ENCODE measurements at regions of chr6 and their contacts with region 1.

Region 1: DNA sequence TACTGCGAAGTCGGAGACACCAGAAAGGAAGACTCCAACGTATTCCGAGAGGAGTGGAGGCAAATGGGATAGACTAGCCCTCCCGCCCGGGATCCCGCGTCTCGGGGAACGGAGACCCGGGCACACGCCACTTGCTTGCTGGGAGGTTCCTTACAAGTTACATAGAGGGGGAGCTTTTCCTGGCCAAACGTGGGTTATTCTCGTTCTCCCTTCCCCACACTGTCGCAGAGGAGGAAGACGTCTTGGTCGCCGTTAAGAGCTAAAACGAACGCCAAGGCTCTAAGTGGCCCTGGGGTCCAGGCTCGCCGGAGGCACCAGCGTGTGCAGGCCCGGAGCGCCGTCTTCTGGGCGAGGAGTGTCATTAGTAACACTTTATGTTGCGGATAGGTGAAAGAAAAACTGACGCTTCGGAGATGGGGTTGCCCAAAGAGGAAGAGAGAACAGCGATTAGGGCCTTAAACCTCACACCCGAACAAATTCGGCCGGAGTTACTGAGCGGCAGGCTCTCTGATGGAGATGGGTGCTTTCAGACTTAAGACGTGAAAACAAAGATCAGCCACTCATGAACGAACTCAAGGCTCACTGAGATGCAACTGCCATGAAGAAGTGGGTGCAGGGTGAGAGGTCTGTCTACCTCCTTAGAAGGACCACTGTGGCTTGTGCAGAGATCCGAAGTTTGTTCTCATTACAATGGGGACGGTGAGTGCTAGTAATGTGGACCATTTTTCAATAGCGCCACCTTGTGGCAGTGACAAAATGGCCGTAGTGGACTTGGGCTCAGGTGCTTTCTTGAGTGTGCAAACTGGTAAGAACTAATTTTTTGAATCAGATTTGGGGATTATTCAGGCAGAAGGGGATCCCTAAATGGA is 11.7 kb upstream of the ZNF311 start:
- DNase-seq: peak; percentile 82 to 83
- H3K4me3 ChIP-seq: peak overlapping the region; percentile 47 to 66 (median 58)
- H3K27ac ChIP-seq: peak overlapping the region in 1 of 2 donors; percentile 20
- H3K4me1 ChIP-seq: no peaks in the 10 kb centered on the region
- H3K27me3 ChIP-seq: peaks cover 0 to 14% of the 10 kb centered on the region in 2 donors
- CTCF ChIP-seq: peak; percentile 81 to 91 (median 87)
- POLR2A ChIP-seq: no peak

Region 2: GRCh38 chr6:28683944-28684538 is 332.8 kb before region 1 on chr6:
- intact Hi-C with region 1: loop called (anchors 5 kb)
- DNase-seq: no peak
- H3K4me3 ChIP-seq: peak overlapping the region in 2 of 3 donors; percentile 10 to 36
- H3K27ac ChIP-seq: no peak overlapping the region
- H3K4me1 ChIP-seq: no peaks in the 10 kb centered on the region
- H3K27me3 ChIP-seq: peaks cover 0 to 22% of the 10 kb centered on the region in 2 donors
- CTCF ChIP-seq: peak in 2 of 3 donors; percentile 25 to 45
- POLR2A ChIP-seq: no peak

Region 3: DNA sequence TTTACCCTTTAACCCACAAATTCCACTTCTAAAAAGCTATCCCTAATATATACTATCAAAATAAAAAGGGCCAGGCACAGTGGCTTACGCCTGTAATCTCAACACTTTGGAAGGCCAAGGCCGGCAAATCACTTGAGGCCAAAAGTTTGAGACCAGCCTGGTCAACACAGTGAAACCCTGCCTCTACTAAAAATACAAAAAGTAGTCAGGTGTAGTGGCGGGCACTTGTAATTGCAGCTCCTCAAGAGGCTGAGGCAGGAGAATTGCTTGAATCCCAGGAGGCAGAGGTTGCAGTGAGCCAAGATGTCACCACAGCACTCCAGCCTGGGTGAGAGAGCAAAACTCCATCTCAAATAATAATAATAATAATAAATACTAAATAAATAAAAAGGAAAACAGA is 175.5 kb before region 1 on chr6:
- intact Hi-C with region 1: loop called (anchors 10 kb)
- DNase-seq: no peak
- H3K4me3 ChIP-seq: no peak overlapping the region
- H3K27ac ChIP-seq: no peak overlapping the region
- H3K4me1 ChIP-seq: no peaks in the 10 kb centered on the region
- H3K27me3 ChIP-seq: peaks cover 0 to 18% of the 10 kb centered on the region in 2 donors
- CTCF ChIP-seq: no peak
- POLR2A ChIP-seq: no peak

Region 4: DNA sequence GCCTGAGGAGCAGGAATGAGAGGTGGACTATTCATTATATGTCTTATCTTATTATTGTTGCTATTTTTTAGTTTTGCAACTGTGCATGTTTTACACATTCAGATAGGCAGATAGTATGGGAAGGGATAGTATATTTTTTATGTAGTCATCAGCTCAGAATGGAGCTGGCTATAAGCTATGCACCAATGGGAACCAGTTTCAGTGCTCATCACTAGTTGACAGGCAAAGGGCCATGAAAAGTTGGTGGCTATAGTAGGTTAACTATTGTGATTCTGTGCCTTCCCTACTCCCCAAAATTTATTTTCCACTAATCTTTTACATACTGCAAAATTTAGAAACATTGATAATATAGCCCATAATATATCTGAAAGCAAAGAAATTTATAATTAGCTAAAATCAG is 548.1 kb after region 1 on chr6:
- intact Hi-C with region 1: no loop called
- DNase-seq: no peak
- H3K4me3 ChIP-seq: no peak overlapping the region
- H3K27ac ChIP-seq: no peak overlapping the region
- H3K4me1 ChIP-seq: no peaks in the 10 kb centered on the region
- H3K27me3 ChIP-seq: no peaks in the 10 kb centered on the region
- CTCF ChIP-seq: no peak
- POLR2A ChIP-seq: no peak